Ascending aorta (tissue), 2 donors: ENCODE measurements at regions of chr7 and their contacts with region 1.

Region 1: GRCh38 chr7:158829342-158830210 is at the start of gene ESYT2:
- DNase-seq: peak; percentile 90 to 98
- H3K4me3 ChIP-seq: peak within 1 kb of the TSS; percentile 74 to 90
- H3K27ac ChIP-seq: peak within 1 kb of the TSS; percentile 97 to 100
- H3K4me1 ChIP-seq: peaks cover 0 to 14% of the 10 kb centered on the region in 2 donors
- H3K27me3 ChIP-seq: no peaks in the 10 kb centered on the region
- CTCF ChIP-seq: peak in 2 of 3 experiments; percentile 42 to 44
- total RNA-seq, gene ESYT2: 102 TPM

Region 2: GRCh38 chr7:158704704-158705468 is 124.7 kb before region 1 on chr7 and contains the start of gene NCAPG2:
- intact Hi-C with region 1: loop called (anchors 2 kb)
- DNase-seq: peak; percentile 91 to 99
- H3K4me3 ChIP-seq: peak within 1 kb of the TSS; percentile 87 to 90
- H3K27ac ChIP-seq: peak within 1 kb of the TSS; percentile 73 to 75
- H3K4me1 ChIP-seq: peaks cover 0 to 3% of the 10 kb centered on the region in 2 donors
- H3K27me3 ChIP-seq: no peaks in the 10 kb centered on the region
- CTCF ChIP-seq: peak in 2 of 3 experiments; percentile 27 to 48
- total RNA-seq, gene NCAPG2: 1.6 TPM

Region 3: DNA sequence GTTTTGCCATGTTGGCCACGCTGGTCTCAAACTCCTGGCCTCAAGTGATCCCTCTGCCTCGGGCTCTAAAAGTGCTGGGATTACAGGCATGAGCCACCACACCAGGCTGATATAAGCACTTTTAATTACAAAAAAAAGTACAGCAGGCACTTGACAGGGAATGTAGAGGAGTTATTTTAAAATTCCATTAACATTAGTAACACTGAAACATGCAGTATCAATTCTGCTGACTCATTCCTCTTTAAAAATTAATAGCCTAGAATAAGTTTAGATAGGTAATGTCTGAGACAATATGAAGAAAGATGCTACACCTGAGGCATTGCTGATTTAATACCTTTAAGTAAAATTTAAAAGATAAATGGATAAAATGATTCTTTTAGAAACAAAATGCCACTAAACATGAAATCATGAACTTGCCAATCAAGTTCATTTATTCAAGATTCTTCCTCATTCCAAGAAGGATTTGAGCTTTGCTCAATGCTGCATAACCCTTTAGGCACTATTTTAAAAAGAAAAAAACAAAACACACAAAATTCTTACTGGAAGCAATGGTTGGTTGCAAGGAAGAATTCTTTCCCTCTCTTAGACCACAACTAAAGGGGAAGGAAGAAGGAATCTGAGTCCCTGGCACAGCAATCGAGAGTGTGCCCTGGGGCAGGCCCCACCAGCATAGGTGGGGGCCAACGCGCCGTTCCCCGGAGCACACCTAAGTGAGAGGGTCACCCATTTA is 26.9 kb before region 1 on chr7:
- intact Hi-C with region 1: loop called (anchors 2 kb)
- DNase-seq: no peak
- H3K4me3 ChIP-seq: no peak overlapping the region
- H3K27ac ChIP-seq: peak overlapping the region; percentile 6 to 34
- H3K4me1 ChIP-seq: peaks cover 0 to 14% of the 10 kb centered on the region in 2 donors
- H3K27me3 ChIP-seq: no peaks in the 10 kb centered on the region
- CTCF ChIP-seq: no peak

Region 4: DNA sequence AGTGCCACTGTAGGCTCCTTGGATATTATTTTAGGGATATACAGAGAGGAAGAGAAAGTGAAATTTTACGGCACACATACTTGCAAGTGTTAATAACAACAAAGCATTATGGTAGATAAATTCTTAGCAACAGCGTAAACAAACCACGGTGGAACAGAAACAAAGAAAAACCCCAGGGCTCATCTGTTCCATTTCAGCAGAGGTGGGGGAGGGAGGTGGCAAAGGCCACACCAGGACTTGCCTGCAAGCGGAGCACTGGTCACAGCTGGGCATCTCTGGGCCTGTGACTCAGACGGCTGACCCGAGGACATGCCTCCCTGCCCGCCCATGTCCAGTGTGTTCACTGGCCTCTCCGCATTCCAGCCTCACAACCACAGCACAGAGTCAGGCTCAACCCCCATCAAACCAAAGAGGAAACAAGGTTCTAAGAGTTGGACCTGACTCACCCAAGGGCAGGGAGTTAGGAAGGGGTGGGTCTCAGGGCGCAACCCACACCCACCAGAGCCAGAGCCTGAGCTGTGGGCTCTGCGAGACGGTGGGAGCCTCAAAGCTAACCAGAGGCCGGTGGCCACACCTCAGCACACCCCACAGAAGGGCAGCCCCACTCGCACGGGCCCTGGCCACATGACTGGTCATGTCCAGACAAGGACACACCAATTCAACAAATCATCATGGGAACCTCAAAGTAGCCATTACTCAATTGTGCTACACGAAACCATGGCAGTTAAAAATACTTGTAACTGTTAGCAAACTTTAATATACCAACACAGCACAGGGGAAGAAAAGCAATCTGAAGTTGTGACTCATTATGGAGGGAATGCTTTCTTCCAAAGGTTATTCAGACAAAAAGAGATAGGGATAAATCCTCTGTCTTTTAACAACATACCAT is 11.0 kb before region 1 on chr7:
- intact Hi-C with region 1: loop called (anchors 1 kb)
- DNase-seq: peak; percentile 86 to 97
- H3K4me3 ChIP-seq: peak overlapping the region; percentile 41 to 57
- H3K27ac ChIP-seq: peak overlapping the region; percentile 89 to 95
- H3K4me1 ChIP-seq: peaks cover 33 to 75% of the 10 kb centered on the region in 2 donors
- H3K27me3 ChIP-seq: no peaks in the 10 kb centered on the region
- CTCF ChIP-seq: no peak

Region 5: DNA sequence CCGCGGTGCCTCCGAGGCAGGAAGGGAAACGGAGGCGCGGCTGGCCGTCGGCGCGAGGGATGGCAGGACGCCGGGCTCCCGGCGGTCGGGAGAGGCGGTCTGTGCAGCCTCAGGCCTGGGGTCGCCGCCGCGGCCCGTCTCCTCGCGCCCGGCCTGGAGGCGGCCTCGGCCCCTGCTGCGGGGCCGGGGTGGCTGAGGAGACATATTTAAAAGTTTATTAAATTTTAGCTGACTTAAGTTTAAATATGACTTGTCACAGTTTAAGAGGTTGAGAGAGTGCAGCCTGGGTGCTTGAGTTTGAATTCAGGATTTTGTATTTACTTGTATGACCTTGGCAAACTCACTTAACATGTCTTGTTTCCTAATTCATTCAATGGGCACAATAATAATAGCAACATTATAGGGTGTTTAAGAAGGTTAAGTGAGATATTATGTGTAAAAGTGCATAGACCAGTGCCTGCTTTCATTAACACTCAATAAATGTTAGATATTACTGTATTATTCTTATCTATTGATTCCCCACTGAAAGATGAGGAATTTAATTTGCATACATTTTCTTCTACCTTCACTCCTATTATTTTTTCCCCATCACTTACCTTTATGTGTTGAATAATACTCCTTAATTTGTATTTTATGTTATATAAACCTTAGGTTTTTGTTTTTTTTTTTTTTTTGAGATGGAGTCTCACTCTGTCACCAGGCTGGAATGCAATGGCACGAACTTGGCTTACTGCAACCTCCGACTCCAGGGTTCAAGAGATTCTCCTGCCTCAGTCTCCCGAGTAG is 27.5 kb after region 1 on chr7:
- intact Hi-C with region 1: loop called (anchors 1 kb)
- DNase-seq: no peak
- H3K4me3 ChIP-seq: peak overlapping the region; percentile 81 to 97
- H3K27ac ChIP-seq: peak overlapping the region; percentile 70 to 83
- H3K4me1 ChIP-seq: peaks cover 10% of the 10 kb centered on the region in 2 donors
- H3K27me3 ChIP-seq: no peaks in the 10 kb centered on the region
- CTCF ChIP-seq: no peak

Region 6: GRCh38 chr7:158991824-158992583 is 162.4 kb after region 1 on chr7:
- intact Hi-C with region 1: no loop called
- DNase-seq: no peak
- H3K4me3 ChIP-seq: no peak overlapping the region
- H3K27ac ChIP-seq: no peak overlapping the region
- H3K4me1 ChIP-seq: no peaks in the 10 kb centered on the region
- H3K27me3 ChIP-seq: no peaks in the 10 kb centered on the region
- CTCF ChIP-seq: no peak

Region 7: DNA sequence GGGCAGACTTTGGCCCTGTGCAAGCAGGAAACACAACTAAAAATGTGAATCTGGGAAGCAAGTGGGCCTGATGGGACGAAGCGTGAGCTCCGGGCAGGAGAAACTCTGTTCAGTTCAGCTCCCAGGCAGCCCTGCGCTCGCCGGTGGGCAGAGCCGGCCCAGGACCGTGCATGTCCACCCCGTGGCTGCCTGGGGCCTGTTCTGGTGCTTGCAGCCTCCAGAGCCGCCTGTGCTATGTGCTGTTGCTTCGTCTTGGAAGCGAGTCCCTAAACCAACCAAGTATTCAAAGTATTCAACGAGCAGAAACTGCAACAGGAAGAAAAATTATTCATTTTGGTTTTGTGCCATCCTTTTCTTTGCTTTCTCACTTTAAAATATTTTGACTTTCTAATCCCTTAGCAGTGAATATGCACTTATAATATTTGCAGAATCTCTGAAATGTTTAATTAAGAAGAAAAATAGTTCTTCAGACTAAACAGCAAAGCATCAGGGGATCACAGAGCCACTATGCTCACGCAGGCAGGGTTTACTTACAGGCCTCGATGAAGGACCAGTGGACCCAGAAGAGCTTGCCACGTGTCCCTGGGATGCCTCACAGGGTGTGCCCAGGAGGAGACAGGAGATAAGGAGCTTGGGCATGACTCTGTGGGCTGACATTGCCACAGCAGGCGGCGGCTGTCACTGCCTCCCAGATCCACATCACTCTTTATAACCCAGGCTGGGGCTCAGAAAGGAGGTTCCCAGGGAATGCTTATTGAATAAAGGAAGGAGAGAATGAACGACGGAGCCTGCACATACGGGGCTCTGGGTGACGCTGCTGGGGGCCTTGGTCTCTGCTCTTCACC is 269.5 kb after region 1 on chr7:
- intact Hi-C with region 1: loop called (anchors 10 kb)
- DNase-seq: peak in 1 of 2 donors; percentile 85
- H3K4me3 ChIP-seq: no peak overlapping the region
- H3K27ac ChIP-seq: peak overlapping the region; percentile 98 to 99
- H3K4me1 ChIP-seq: peaks cover 43 to 65% of the 10 kb centered on the region in 2 donors
- H3K27me3 ChIP-seq: no peaks in the 10 kb centered on the region
- CTCF ChIP-seq: peak; percentile 11 to 31 (median 19)